Heart right ventricle (tissue), 16 donors: ENCODE measurements at regions of chr3 and their contacts with region 1.

Region 1: GRCh38 chr3:49454458-49454857 is 15.6 kb upstream of the DAG1 start:
- DNase-seq: no peak
- ATAC-seq: peak in 6 of 8 donors; percentile 34 to 75 (median 65)
- H3K4me3 ChIP-seq: no peak overlapping the region
- H3K27ac ChIP-seq: peak overlapping the region in 8 of 10 donors; percentile 7 to 76 (median 54)
- H3K4me1 ChIP-seq: peaks cover 9 to 38% (median 19%) of the 10 kb centered on the region in 9 donors
- H3K27me3 ChIP-seq: no peaks in the 10 kb centered on the region
- CTCF ChIP-seq: peak in 8 of 9 donors; percentile 19 to 57 (median 38)

Region 2: GRCh38 chr3:49295489-49296058 is 158.9 kb before region 1 on chr3:
- intact Hi-C with region 1: loop called in 3 of 10 experiments (anchors 2 to 10 kb)
- DNase-seq: peak in 1 of 2 donors; percentile 14
- ATAC-seq: no peak
- H3K4me3 ChIP-seq: no peak overlapping the region
- H3K27ac ChIP-seq: peak overlapping the region in 7 of 10 donors; percentile 78 to 93 (median 84)
- H3K4me1 ChIP-seq: peaks cover 3 to 48% (median 25%) of the 10 kb centered on the region in 9 donors
- H3K27me3 ChIP-seq: no peaks in the 10 kb centered on the region
- CTCF ChIP-seq: peak in 8 of 9 donors; percentile 26 to 69 (median 56)

Region 3: GRCh38 chr3:49616491-49616941 is 162.1 kb after region 1 on chr3:
- intact Hi-C with region 1: no loop called
- DNase-seq: no peak
- ATAC-seq: no peak
- H3K4me3 ChIP-seq: no peak overlapping the region
- H3K27ac ChIP-seq: no peak overlapping the region
- H3K4me1 ChIP-seq: no peaks in the 10 kb centered on the region
- H3K27me3 ChIP-seq: no peaks in the 10 kb centered on the region
- CTCF ChIP-seq: no peak

Region 4: GRCh38 chr3:49972656-49973055 is 518.2 kb after region 1 on chr3:
- intact Hi-C with region 1: no loop called
- DNase-seq: no peak
- ATAC-seq: no peak
- H3K4me3 ChIP-seq: no peak overlapping the region
- H3K27ac ChIP-seq: no peak overlapping the region
- H3K4me1 ChIP-seq: peaks cover 0 to 7% (median 0%) of the 10 kb centered on the region in 9 donors
- H3K27me3 ChIP-seq: no peaks in the 10 kb centered on the region
- CTCF ChIP-seq: no peak